Dendritic cell treated with granulocyte-macrophage colony-stimulating factor and Interleukin-4, amounts not matched to agents 40 ng/mL and 50 ng/mL, for 4 days (primary cell): ENCODE measurements at regions of chr2 and their contacts with region 1.

Region 1: DNA sequence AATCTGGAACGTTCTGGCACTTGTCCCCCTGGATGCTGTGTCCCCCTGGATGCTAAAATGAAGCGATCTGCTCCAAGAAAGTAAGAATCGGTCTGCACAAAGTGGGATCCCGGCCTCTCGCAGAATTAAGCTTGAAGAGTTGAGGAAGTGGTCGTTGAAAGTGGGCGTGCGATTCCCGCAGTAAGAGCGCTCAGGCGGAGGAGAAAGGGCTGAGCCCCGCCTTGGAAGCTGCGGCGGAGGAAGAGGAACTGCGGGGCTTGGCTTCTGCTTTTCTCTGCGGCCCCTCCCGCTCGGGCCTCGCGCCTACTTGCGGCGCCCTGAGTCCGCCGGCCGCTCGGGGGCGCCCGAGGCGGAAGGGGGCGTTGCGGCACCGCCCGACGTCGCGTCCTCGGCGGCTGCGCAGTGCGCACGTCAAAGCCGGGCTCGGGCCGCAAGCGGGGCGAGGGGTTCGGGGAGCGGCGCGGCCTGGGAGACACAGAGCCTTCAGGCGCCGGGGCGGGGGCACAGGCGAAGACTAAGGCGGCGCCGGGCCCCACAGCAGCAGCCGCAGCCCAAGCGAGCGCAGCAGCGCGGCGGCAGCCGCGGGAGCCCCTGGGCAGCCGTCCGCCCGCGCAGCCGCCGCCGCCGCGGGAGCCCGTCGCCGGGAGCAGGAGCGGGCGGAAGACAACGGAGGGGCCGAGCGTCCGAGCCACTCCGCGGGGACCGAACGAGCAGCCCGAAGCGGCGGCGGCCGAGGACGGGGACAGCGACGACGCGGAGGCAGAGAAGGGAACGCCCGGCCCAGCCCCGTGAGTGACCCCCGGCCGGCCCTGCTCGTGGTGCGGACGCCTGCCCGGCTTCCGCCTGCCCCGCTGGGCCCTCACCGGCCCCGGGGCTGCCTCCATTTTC is at the start of gene CAB39:
- H3K4me3 Mint-ChIP-seq: peak within 1 kb of the TSS; percentile 95
- H3K27ac Mint-ChIP-seq: peak within 1 kb of the TSS; percentile 88
- H3K4me1 Mint-ChIP-seq: peaks cover 68% of the 10 kb centered on the region
- H3K27me3 Mint-ChIP-seq: no peaks in the 10 kb centered on the region

Region 2: DNA sequence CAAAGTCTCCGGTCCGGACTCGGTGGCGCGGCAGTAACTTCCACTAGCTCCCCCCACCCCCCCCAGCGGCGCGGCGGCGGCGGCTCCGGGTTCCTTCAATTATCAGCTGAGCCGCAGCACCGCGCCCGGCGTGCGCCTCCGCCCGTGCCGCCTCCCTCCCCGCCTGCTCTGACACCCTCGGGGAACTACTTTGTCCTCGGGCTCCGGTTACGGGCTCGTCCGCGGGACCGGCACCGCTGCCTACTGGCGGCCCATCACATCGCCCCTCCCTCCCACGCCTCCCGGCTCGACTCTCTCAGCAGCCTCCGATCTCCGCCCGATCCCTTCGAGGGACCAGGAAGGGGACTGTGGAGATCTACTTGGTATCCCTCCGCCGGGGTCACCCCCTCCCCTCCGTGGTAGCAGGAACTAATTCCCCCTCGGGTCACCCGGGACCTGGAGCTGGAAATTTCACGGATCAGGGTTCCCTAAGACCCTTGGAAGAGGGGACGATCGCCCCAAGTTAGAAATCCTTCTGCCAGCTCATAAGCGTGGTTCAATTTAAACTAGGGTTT is 790.7 kb before region 1 on chr2 and contains the start of gene TRIP12:
- intact Hi-C with region 1: loop called (anchors 5 kb)
- H3K4me3 Mint-ChIP-seq: peak within 1 kb of the TSS; percentile 98
- H3K27ac Mint-ChIP-seq: peak within 1 kb of the TSS; percentile 98
- H3K4me1 Mint-ChIP-seq: peaks cover 35% of the 10 kb centered on the region
- H3K27me3 Mint-ChIP-seq: no peaks in the 10 kb centered on the region

Region 3: DNA sequence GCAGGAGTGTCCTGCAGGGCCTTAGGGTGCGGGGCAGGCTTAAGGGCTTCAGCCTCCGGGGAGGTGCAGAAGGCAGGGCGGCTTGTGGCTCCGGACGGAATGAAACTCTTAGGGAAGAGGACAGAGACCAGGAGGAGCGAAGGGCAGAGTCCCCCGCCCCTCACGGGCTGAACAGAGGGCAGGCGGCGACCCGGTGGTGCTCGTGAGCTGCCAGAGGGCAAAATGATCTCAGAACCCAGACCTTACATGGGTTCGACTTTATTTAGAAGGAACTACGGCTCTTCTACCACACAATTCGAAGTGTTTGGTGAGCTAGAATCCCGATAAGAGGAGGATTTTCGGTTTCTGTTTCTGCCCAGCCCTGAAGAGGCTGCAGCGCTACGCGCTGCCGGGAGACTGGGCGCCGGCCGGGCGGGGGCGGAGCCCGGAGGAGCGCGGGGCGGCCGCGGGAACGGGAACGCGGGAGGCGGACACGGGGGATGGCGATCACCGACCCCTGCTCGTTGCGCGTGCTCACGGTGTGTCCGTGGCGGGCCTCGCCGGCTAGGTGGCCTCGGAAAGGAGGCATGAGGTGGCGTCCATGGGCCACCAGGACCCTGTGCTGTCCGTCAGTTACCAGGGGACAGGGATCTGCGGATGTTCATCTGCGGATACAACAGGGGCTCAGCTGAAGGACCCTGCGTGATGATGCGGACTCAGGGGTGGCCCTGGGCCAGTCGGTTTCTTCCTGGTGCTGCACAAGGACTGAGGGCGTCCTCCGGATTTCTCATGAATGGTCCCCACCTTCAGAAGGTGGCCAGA is 300.9 kb before region 1 on chr2:
- intact Hi-C with region 1: loop called (anchors 10 kb)
- H3K4me3 Mint-ChIP-seq: peak overlapping the region; percentile 94
- H3K27ac Mint-ChIP-seq: peak overlapping the region; percentile 96
- H3K4me1 Mint-ChIP-seq: peaks cover 66% of the 10 kb centered on the region
- H3K27me3 Mint-ChIP-seq: peaks cover 5% of the 10 kb centered on the region

Region 4: DNA sequence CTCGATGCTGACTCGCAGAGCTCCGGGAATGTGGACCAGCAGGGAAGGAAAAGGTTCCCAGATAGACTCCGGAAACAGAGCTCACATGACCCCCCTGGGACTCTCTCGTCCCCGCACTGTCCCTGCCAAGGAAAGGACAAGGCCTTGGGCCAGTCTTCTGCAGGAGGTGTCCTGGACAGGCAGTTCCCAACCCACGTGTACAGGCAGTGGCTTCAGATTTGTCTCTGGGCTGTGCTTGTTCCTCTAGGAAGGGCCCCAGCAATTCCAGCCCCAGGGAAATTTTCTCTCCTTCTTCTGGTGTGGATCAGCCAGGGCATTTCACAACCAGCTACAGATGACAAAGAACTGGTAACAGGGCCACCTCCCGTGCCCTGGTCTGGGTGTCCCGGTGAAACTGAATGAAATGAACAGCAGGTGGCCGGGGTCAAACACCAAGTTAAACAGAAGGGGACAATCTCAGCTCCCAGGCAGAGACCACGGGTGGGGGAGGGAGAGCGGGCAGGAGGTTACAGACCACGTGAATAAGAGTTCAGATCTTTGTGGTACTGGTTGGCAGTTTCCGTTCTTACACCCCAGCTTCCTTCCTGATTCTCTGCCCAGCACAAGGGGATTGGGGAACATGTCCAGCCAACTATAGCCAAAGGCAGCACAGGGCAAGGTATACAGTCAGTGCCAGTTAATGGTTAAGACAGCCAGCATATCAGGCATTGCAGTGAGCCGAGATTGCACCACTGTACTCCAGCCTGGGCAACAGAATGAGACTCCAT is 52.2 kb before region 1 on chr2:
- intact Hi-C with region 1: loop called (anchors 1 kb)
- H3K4me3 Mint-ChIP-seq: no peak overlapping the region
- H3K27ac Mint-ChIP-seq: peak overlapping the region; percentile 82
- H3K4me1 Mint-ChIP-seq: peaks cover 93% of the 10 kb centered on the region
- H3K27me3 Mint-ChIP-seq: no peaks in the 10 kb centered on the region

Region 5: DNA sequence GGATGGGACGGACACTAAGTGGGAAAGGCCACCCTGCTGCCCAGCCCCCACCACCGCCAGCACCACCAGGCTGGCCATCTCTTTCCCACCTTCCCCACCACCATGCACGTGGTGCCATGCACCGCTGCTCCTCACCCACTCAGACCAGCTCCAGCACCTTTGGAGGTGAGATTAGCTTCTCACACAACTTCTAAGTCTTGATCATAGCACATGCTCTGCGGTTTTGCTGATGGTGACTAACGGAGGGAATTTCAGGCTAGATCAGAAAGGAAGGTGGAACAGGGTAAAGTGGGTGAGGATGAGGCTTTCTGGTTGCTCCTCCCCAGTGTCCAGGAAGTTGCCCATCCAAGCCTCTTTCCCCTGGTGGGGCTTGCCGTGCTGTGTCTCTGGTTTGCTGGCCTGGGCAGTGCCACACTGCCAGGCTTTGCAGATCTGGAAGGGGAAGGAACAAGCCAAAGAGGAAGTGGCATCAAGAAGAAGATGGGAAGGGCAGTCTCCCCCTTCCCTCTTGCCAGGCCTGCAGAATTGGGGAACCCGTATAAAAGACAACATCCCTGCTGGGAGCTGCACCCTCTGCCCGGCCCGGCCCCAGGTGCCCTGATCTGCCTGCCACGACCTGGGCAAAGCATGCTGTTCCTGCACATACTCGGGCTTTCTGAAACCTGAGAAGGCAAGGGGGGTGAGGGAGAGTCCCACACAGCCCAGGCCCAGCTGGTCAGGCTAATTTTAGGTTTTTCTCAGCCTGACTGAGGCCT is 44.3 kb before region 1 on chr2:
- intact Hi-C with region 1: loop called (anchors 2 kb)
- H3K4me3 Mint-ChIP-seq: peak overlapping the region; percentile 41
- H3K27ac Mint-ChIP-seq: peak overlapping the region; percentile 89
- H3K4me1 Mint-ChIP-seq: peaks cover 78% of the 10 kb centered on the region
- H3K27me3 Mint-ChIP-seq: no peaks in the 10 kb centered on the region

Region 6: DNA sequence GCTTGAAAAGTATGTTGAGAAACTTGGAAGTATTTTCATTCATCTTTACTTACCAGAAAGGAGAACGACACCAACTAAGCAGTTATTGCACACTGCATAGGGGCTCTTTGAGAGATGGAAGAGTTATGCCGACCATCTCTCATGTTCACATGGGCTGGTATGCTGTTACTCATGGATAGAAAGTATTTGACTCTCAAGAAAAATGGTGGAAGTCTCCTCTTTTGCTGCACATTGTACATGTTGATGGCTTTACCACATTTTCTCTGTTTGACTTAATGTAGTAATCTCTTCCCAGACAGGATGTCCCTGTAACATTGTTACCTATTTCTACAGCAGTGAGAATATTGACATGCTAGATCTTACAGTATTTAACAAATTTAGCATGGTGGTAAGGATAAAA is 23.2 kb after region 1 on chr2:
- intact Hi-C with region 1: no loop called
- H3K4me3 Mint-ChIP-seq: no peak overlapping the region
- H3K27ac Mint-ChIP-seq: no peak overlapping the region
- H3K4me1 Mint-ChIP-seq: peaks cover 54% of the 10 kb centered on the region
- H3K27me3 Mint-ChIP-seq: no peaks in the 10 kb centered on the region

Region 7: DNA sequence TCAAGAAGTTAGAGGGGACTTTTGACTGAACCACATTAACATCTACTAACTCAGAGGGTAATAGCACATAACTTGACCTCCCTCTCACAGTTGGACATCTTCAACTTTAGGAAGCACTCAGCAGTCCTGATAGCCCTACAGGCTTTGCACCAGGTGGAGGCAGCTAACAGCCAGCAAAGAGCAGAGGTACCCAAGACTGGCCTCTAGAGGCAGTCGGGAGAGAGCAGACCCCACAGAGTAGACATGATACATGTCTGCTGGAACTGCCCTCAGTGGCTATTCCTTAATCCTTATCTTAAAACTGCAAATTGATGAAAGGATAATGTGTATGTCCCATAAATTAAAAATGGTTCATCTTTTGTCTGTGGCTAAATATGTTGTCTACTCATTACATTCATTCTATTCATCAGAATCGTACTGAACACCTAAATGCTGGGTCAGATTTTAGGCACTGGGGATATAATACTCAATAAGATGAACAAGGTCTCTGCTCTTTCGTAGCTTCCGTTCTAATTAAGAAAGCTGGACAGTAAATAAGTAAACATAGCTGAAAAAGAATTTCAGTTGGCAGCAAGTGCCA is 49.7 kb after region 1 on chr2:
- intact Hi-C with region 1: loop called (anchors 5 kb)
- H3K4me3 Mint-ChIP-seq: no peak overlapping the region
- H3K27ac Mint-ChIP-seq: no peak overlapping the region
- H3K4me1 Mint-ChIP-seq: peaks cover 55% of the 10 kb centered on the region
- H3K27me3 Mint-ChIP-seq: no peaks in the 10 kb centered on the region

Region 8: DNA sequence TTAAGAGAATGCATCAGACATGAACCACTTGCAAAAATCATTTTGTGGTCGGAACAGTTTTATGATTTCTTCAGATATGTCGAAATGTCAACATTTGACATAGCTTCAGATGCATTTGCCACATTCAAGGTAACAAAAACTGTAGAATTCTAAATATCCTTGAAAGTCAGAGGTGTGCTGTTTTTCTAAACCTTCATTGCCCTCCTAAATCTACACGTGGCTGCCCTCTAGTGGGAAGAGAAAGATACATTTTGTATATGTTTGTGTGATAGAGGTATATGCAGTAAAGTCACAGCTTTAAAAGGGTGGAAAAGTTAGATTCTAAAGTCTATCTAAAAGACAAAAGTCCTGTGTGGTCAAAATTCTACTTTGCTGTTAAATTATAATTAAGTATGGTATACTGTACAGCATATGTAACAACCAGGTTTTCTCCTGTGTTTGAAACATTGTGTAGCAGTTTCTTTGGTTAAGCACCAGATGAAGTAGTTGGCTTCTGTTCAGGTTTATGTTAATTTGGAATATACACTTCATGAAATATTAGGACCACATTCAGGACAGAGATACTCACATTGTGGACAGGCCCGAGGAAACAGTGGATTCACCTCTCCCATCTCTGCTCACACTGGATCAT is 86.2 kb after region 1 on chr2:
- intact Hi-C with region 1: loop called (anchors 5 kb)
- H3K4me3 Mint-ChIP-seq: no peak overlapping the region
- H3K27ac Mint-ChIP-seq: no peak overlapping the region
- H3K4me1 Mint-ChIP-seq: peaks cover 16% of the 10 kb centered on the region
- H3K27me3 Mint-ChIP-seq: no peaks in the 10 kb centered on the region